B cell (primary cell): ENCODE measurements at regions of chr12 and their contacts with region 1.

Region 1: DNA sequence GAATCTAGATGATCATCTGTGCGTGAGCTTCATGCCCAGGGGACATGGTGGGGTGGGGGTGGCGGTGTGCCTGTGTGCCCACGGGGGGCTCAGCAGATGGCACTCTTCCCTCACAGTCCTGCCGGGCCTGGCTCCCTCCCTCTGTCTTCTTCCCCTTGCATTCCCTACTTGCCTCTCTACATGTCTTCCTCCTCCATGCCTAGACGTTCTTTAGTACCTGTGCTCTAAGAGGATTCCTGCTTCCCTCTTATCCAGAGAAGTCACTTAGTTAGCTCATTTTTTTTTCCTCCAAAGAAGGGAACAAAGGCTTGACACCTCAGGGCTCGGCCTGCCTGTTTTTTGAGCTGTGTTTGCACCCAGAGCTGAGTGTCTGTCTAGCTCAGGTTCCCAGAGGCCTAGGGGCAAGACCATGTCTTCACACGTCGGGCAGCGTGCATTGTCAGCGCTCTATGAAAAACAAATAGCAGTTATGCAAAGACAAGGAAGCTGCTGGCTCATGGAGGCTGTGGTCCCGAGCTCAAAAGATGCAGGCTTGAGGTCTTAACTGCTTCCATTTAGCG is 48.8 kb downstream of the NINJ2 start:
- DNase-seq: peak; percentile 62
- ATAC-seq: peak; percentile 68
- H3K4me3 ChIP-seq: no peak overlapping the region
- H3K4me3 Mint-ChIP-seq: no peak overlapping the region
- H3K27ac ChIP-seq: no peak overlapping the region
- H3K27ac Mint-ChIP-seq: no peak overlapping the region
- H3K4me1 ChIP-seq: peaks cover 20 to 21% of the 10 kb centered on the region in 2 donors
- H3K4me1 Mint-ChIP-seq: peaks cover 24% of the 10 kb centered on the region
- H3K27me3 ChIP-seq: no peaks in the 10 kb centered on the region
- H3K27me3 Mint-ChIP-seq: no peaks in the 10 kb centered on the region
- CTCF ChIP-seq: peak; percentile 45

Region 2: GRCh38 chr12:575948-576612 is 38.4 kb before region 1 on chr12:
- CTCF ChIA-PET with region 1: interaction called, 13 read pairs
- POLR2A ChIA-PET with region 1: interaction called, 3 read pairs
- intact Hi-C with region 1: no loop called
- DNase-seq: peak; percentile 88
- ATAC-seq: peak; percentile 99
- H3K4me3 ChIP-seq: peak overlapping the region in 4 of 5 experiments; percentile 20 to 34 (median 26)
- H3K4me3 Mint-ChIP-seq: peak overlapping the region; percentile 79
- H3K27ac ChIP-seq: no peak overlapping the region
- H3K27ac Mint-ChIP-seq: peak overlapping the region; percentile 65
- H3K4me1 ChIP-seq: peaks cover 8 to 12% of the 10 kb centered on the region in 2 donors
- H3K4me1 Mint-ChIP-seq: peaks cover 8% of the 10 kb centered on the region
- H3K27me3 ChIP-seq: no peaks in the 10 kb centered on the region
- H3K27me3 Mint-ChIP-seq: no peaks in the 10 kb centered on the region
- CTCF ChIP-seq: peak; percentile 97

Region 3: GRCh38 chr12:630656-631632 is 16.5 kb after region 1 on chr12:
- CTCF ChIA-PET with region 1: interaction called, 52 read pairs
- POLR2A ChIA-PET with region 1: no interaction called
- intact Hi-C with region 1: no loop called
- DNase-seq: peak; percentile 51
- ATAC-seq: peak; percentile 82
- H3K4me3 ChIP-seq: peak overlapping the region; percentile 51 to 79 (median 66)
- H3K4me3 Mint-ChIP-seq: peak overlapping the region; percentile 80
- H3K27ac ChIP-seq: peak overlapping the region; percentile 83 to 93
- H3K27ac Mint-ChIP-seq: peak overlapping the region; percentile 91
- H3K4me1 ChIP-seq: peaks cover 4 to 32% of the 10 kb centered on the region in 2 donors
- H3K4me1 Mint-ChIP-seq: peaks cover 38% of the 10 kb centered on the region
- H3K27me3 ChIP-seq: no peaks in the 10 kb centered on the region
- H3K27me3 Mint-ChIP-seq: no peaks in the 10 kb centered on the region
- CTCF ChIP-seq: no peak

Region 4: GRCh38 chr12:666766-667308 is 52.3 kb after region 1 on chr12:
- CTCF ChIA-PET with region 1: interaction called, 11 read pairs
- POLR2A ChIA-PET with region 1: no interaction called
- intact Hi-C with region 1: loop called (anchors 5 kb)
- DNase-seq: no peak
- ATAC-seq: no peak
- H3K4me3 ChIP-seq: no peak overlapping the region
- H3K4me3 Mint-ChIP-seq: peak overlapping the region; percentile 54
- H3K27ac ChIP-seq: no peak overlapping the region
- H3K27ac Mint-ChIP-seq: peak overlapping the region; percentile 12
- H3K4me1 ChIP-seq: peaks cover 25 to 32% of the 10 kb centered on the region in 2 donors
- H3K4me1 Mint-ChIP-seq: peaks cover 45% of the 10 kb centered on the region
- H3K27me3 ChIP-seq: no peaks in the 10 kb centered on the region
- H3K27me3 Mint-ChIP-seq: no peaks in the 10 kb centered on the region
- CTCF ChIP-seq: no peak

Region 5: DNA sequence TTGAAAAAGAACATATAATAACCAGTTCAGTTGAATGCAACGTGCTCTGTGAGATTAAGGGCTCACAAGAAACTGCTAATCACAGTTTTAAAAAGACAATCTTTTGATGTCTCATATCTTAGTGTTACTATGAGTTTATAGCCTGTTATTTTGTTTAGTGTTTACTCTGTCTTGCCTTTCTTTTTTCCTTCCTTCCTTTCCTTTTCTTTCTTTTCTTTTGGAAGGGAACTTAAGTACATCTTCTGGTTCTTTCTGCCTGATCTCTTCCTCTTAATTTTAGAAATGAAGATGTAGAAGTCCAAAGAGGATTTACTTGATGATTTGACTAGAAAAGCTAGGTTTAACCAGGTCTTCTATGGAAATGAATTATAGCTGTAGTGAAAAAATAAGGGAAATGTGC is 176.1 kb after region 1 on chr12:
- CTCF ChIA-PET with region 1: interaction called, 11 read pairs
- POLR2A ChIA-PET with region 1: no interaction called
- intact Hi-C with region 1: no loop called
- DNase-seq: no peak
- ATAC-seq: no peak
- H3K4me3 ChIP-seq: no peak overlapping the region
- H3K4me3 Mint-ChIP-seq: no peak overlapping the region
- H3K27ac ChIP-seq: no peak overlapping the region
- H3K27ac Mint-ChIP-seq: no peak overlapping the region
- H3K4me1 ChIP-seq: peaks cover 19 to 27% of the 10 kb centered on the region in 2 donors
- H3K4me1 Mint-ChIP-seq: peaks cover 61% of the 10 kb centered on the region
- H3K27me3 ChIP-seq: no peaks in the 10 kb centered on the region
- H3K27me3 Mint-ChIP-seq: no peaks in the 10 kb centered on the region
- CTCF ChIP-seq: no peak

Region 6: GRCh38 chr12:949453-950191 is 335.1 kb after region 1 on chr12 and contains the start of gene RAD52:
- CTCF ChIA-PET with region 1: interaction called, 11 read pairs
- POLR2A ChIA-PET with region 1: no interaction called
- intact Hi-C with region 1: no loop called
- DNase-seq: peak; percentile 99
- ATAC-seq: peak; percentile 86
- H3K4me3 ChIP-seq: peak within 1 kb of the TSS; percentile 67 to 91 (median 74)
- H3K4me3 Mint-ChIP-seq: peak within 1 kb of the TSS; percentile 88
- H3K27ac ChIP-seq: peak within 1 kb of the TSS; percentile 82 to 84
- H3K27ac Mint-ChIP-seq: peak within 1 kb of the TSS; percentile 90
- H3K4me1 ChIP-seq: peaks cover 0 to 13% of the 10 kb centered on the region in 2 donors
- H3K4me1 Mint-ChIP-seq: peaks cover 27% of the 10 kb centered on the region
- H3K27me3 ChIP-seq: no peaks in the 10 kb centered on the region
- H3K27me3 Mint-ChIP-seq: no peaks in the 10 kb centered on the region
- CTCF ChIP-seq: peak; percentile 99
- total RNA-seq, gene RAD52: 22.9 and 27.6 TPM in 2 replicates